Esophagus muscularis mucosa (tissue), 4 donors: ENCODE measurements at regions of chr20 and their contacts with region 1.

Region 1: DNA sequence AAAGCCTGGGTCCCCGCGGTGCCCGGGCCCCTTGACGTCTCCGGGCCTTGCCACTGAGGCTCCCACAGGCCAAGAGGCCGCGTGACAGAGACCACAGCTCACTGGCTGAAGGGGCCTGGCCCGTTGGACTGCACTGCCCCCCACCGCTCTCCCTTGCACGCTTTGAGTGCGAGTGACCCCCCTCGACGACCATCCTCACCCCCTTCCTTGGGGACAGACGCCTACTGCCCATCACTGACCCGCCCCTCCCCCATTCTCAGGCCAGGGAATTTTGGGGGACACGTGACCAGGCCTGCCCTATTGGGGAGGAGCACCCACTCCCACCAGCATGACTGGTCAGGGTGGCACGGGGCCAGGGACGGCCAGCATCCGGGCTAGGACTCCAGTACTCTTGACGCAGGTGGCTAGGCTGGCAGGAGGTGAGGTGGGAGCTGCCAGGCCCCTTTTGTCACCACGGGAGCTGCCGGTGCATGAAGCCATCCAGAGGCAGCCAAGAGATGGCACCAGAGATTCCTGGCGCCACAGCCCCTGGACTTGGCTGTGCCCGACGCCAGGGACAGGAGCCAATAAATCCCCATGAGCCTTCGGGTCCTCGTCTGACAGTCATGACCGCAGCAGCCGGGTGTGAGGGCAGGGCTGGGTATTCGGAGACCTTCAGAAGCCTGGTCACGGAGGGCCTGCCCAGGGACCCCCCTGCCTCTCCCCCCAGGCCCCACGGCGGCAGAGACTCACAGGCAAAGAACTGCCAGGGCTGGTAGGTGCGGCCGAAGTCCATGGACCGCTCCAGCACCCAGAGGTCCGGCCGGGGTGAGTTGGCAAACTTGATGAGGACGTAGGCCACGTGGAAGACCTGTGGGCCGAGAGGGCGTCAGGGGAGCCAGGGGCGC is 14.5 kb downstream of the LAMA5 start:
- DNase-seq: no peak
- H3K4me3 ChIP-seq: no peak overlapping the region
- H3K27ac ChIP-seq: peak overlapping the region; percentile 93 to 97 (median 93)
- H3K4me1 ChIP-seq: peaks cover 54 to 64% (median 57%) of the 10 kb centered on the region in 4 donors
- H3K27me3 ChIP-seq: no peaks in the 10 kb centered on the region
- CTCF ChIP-seq: peak; percentile 56 to 76 (median 60)
- EP300 ChIP-seq: no peak
- POLR2A ChIP-seq: no peak

Region 2: DNA sequence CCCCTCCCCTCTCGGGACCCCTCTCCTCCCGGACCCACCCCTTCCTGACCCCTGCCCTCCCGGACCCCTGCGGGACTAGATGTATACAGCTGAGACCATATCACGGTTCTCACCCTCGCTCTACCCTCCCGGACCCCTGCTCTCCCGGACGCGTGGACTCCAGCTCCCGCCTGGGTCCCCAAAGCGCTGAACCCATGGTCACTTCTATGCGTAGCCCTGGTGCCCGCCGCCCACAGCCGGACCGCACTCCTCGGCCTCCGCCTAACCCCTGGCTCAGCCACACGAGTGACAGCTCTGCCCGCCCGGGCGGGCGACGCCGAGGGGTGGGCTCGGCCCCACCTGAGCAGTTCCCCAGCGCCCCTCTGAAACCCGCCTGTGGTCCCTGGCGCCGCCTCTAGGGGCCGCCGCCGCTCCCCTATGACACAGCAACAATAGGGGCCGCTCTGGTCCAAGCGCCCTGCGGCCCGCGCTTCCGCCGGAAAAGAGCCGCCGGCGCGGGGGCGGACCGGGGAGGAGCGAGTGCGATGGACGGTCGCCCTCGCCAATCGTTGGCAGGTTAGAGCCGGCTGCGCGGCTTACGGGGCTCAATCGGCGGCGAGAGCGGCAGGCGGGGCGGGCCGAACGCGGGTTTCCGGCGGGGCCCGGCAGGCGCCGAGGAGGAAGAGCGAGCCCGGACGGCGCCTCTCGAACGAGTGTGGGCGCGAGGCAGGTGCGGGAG is 50.1 kb before region 1 on chr20 and contains the start of gene ADRM1:
- intact Hi-C with region 1: loop called (anchors 2 kb)
- DNase-seq: peak; percentile 98
- H3K4me3 ChIP-seq: peak within 1 kb of the TSS; percentile 77 to 99 (median 86)
- H3K27ac ChIP-seq: peak within 1 kb of the TSS; percentile 95 to 99 (median 98)
- H3K4me1 ChIP-seq: peaks cover 27 to 54% (median 39%) of the 10 kb centered on the region in 4 donors
- H3K27me3 ChIP-seq: no peaks in the 10 kb centered on the region
- CTCF ChIP-seq: peak in 2 of 3 experiments; percentile 98 to 99
- EP300 ChIP-seq: no peak
- POLR2A ChIP-seq: peak; percentile 39
- total RNA-seq, gene ADRM1: 127 to 184 (median 173) TPM

Region 3: GRCh38 chr20:62376112-62377063 is 23.7 kb after region 1 on chr20:
- intact Hi-C with region 1: loop called (anchors 1 kb)
- DNase-seq: no peak
- H3K4me3 ChIP-seq: peak overlapping the region in 2 of 4 donors; percentile 10 to 19
- H3K27ac ChIP-seq: peak overlapping the region; percentile 74 to 97 (median 81)
- H3K4me1 ChIP-seq: peaks cover 52 to 82% (median 79%) of the 10 kb centered on the region in 4 donors
- H3K27me3 ChIP-seq: no peaks in the 10 kb centered on the region
- CTCF ChIP-seq: peak; percentile 59 to 75 (median 70)
- EP300 ChIP-seq: no peak
- POLR2A ChIP-seq: no peak